Right ventricle myocardium inferior (tissue), 1 donor: ENCODE measurements at regions of chr2 and their contacts with region 1.

Region 1: DNA sequence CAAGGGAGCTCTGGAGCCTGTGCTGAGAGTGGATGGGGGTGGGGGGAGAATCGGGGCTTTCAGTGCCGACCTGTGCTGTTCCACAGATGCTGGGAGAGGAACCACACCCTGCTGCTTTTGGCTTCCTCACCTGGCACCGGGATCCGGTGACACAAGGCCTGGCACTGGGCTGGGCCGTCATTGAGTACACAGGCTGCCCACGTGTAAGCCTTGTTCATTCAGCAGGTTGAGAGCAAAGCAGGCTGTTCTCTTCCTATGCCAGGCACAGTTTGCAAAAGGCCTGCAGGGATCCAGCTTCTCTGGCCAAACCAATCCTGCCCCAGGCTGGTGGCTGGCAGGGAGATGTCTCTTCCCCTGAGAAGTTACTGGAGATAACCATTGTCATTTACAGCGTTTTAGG is 17.1 kb downstream of the TRIB2 start:
- DNase-seq: peak; percentile 76
- ATAC-seq: peak; percentile 74

Region 2: DNA sequence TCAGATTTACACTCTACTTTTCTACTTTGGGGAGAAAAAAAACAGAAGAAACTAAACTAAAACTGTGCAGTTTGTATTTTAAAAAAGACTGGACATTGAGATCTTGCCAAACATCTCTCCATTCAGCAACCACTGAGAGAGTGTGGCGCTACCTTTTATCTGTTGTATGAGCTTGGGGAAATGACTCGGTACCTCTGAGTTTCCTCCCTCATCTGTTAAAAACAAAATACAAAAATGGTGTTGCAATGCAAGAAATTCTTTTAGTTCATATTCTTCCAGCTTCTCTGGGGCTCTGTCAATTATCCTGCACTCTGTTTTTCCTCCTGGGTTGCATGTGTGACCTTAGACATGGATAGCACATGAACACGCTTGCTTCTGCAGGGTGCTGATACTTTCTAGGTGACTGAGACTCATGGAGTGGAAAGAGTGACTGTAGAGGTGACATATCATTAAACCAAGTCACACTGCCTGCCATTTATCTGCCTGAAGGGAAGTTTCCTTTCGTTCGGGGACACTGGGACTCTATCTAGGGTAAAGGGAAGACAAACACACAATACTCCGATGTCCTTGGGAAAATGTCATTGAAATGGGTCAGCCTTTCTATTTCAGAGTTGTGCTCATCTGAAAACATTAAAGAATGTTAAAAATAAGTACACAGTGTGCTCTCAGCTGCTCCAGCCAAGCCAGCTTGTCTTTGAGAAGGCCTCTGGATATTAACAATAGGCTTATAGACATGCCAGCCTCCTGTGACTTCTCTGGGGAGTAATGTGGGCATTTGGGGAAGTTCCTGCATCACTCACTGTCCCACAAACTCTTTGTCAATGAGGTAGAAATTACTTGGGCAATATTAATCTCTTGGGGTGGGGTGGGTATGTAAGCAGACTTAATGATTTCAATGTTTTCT is 74.3 kb after region 1 on chr2:
- intact Hi-C with region 1: loop called (anchors 5 kb)
- DNase-seq: no peak
- ATAC-seq: peak; percentile 84

Region 3: DNA sequence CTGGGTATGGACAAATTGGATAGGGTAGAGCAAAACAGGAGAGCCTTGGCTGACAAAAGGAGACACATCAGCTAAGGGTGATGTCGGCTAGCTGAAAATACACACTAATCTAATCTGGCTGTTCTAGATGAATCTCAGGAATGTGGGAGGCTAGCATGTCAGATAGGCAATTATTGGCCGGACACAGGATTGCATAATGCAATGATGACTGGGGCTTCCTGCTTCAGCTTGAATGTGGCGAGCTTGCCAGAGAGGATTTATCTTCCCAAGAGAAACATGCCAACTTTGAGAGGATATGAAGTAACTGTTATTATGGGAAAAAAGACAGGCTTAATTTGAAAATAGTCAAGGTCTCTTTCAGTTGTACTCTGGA is 85.2 kb after region 1 on chr2:
- intact Hi-C with region 1: loop called (anchors 2 kb)
- DNase-seq: no peak
- ATAC-seq: peak; percentile 97